ENCODE measurements at regions of chr12 and their contacts with region 1.

Region 1: DNA sequence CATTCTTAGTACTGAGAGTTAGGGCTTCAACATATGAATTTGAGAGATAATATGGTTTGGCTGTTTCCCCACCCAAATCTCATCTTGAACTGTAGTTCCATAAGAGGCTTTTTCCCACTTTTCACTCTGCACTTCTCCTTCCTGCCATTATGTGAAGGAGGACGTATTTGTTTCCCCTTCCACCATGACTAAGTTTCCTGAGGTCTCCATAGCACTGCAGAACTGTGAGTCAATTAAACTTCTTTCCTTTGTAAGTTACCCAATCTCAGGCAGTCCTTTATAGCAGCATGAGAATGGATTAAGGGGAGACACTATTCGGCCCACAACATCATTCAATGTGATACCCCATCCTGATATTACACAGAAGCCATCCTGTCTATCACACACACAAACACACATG is 36.8 kb upstream of the ALG10B start:
- DNase-seq: no peak

Region 2: GRCh38 chr12:38201461-38202276 is 78.1 kb before region 1 on chr12:
- intact Hi-C with region 1: no loop called
- DNase-seq: no peak

Region 3: GRCh38 chr12:38222011-38222410 is 57.7 kb before region 1 on chr12:
- intact Hi-C with region 1: loop called in 1 of 2 experiments (anchors 2 kb)
- DNase-seq: no peak